IMR-90 (cell line): ENCODE measurements at regions of chr6 and their contacts with region 1.

Region 1: DNA sequence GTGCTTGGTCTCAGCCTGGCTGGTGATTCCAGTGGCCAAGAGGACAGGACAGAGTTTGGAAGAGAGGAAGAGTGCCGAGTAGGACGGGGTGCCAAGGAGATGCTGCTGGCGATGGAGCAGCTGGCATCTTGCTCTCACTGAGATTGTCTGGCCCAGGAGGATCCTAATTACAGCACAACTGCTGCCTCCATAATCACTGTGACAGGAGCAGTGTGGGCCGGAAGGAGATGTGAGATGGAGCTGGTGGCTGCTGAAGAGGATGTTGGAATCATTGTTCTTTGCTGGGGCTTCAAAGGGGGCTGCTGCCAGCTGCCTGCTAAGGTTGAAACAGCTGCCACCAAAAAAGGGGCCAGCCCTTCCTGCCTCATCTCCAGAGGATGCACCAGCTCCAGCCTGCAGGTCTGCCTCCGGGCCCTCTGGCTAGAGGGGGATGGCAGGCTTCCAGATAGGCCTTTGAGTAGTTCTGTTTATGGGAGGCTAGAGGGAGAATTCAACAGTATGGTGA is 214.4 kb downstream of the RNF144B start:
- DNase-seq: no peak
- ATAC-seq: no peak
- H3K4me3 ChIP-seq: no peak overlapping the region
- H3K27ac ChIP-seq: no peak overlapping the region
- H3K4me1 ChIP-seq: no peaks in the 10 kb centered on the region
- H3K27me3 ChIP-seq: no peaks in the 10 kb centered on the region
- CTCF ChIP-seq: no peak
- POLR2A ChIP-seq: no peak
- RAD21 ChIP-seq: no peak

Region 2: GRCh38 chr6:18613319-18613925 is 11.9 kb after region 1 on chr6:
- CTCF ChIA-PET with region 1: no interaction called
- POLR2A ChIA-PET with region 1: interaction called, 10 read pairs
- dilution Hi-C with region 1: no loop called
- in situ Hi-C with region 1: no loop called
- intact Hi-C with region 1: no loop called
- DNase-seq: no peak
- ATAC-seq: no peak
- H3K4me3 ChIP-seq: no peak overlapping the region
- H3K27ac ChIP-seq: no peak overlapping the region
- H3K4me1 ChIP-seq: no peaks in the 10 kb centered on the region
- H3K27me3 ChIP-seq: no peaks in the 10 kb centered on the region
- CTCF ChIP-seq: no peak
- POLR2A ChIP-seq: no peak
- RAD21 ChIP-seq: no peak